GM10248 (cell line): ENCODE measurements at regions of chr1 and their contacts with region 1.

Region 1: DNA sequence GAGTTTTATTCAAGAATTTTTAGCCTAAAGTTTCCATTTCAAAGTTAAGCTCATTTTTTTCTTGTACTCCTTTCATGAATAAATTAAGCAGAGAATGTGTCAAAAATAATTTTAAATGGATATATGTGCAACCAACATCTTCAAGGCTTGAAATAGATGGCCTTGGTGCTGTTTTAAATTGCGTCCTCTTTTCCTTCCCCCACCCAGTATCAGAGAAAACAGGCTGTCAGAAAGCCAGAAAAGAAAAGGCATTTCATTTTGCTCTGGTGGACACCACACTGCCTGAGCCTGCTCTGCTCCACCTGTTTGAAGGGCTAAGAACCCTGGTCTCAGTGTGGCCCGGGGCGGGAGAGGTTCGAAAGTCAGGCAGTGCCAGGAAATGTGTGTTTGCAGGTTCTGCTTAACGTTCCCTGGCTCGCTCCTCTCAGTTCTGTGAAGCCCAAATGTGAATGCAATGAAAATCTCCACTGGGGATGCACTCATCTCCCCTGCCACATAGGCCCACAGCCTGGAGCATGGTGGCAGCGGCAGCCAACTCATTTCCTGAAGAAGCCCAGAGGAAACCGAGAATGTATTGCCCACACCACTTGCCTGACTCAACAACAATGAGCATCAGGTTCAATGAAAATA is 134.4 kb downstream of the SDCCAG8 start:
- DNase-seq: no peak
- CTCF ChIP-seq: no peak

Region 2: GRCh38 chr1:241611063-241611462 is 1779.2 kb before region 1 on chr1:
- CTCF ChIA-PET with region 1: no interaction called
- POLR2A ChIA-PET with region 1: no interaction called
- DNase-seq: peak; percentile 43
- CTCF ChIP-seq: peak; percentile 54

Region 3: GRCh38 chr1:244989813-244990212 is 1599.5 kb after region 1 on chr1:
- CTCF ChIA-PET with region 1: no interaction called
- POLR2A ChIA-PET with region 1: interaction called, 14 read pairs
- DNase-seq: no peak
- CTCF ChIP-seq: no peak